ENCODE measurements at regions of chr3 and their contacts with region 1.

Region 1: GRCh38 chr3:179451265-179452175 is at the start of gene GNB4:
- DNase-seq: peak; percentile 62
- H3K4me3 ChIP-seq: peak within 1 kb of the TSS; percentile 49 to 77 (median 56)
- H3K27ac ChIP-seq: peak within 1 kb of the TSS; percentile 90 to 97 (median 92)
- H3K4me1 ChIP-seq: peaks cover 0 to 32% (median 8%) of the 10 kb centered on the region in 4 donors
- H3K27me3 ChIP-seq: peaks cover 27% of the 10 kb centered on the region
- CTCF ChIP-seq: no peak
- EP300 ChIP-seq: no peak
- POLR2A ChIP-seq: no peak
- total RNA-seq, gene GNB4: 9.0 to 11.6 (median 10.2) TPM

Region 2: GRCh38 chr3:179347345-179348194 is 104.0 kb before region 1 on chr3 and contains the start of gene MFN1:
- in situ Hi-C with region 1: no loop called
- intact Hi-C with region 1: loop called (anchors 5 kb)
- DNase-seq: peak; percentile 95
- H3K4me3 ChIP-seq: peak within 1 kb of the TSS; percentile 55 to 80 (median 70)
- H3K27ac ChIP-seq: peak within 1 kb of the TSS; percentile 87 to 94 (median 91)
- H3K4me1 ChIP-seq: peaks cover 6 to 17% (median 7%) of the 10 kb centered on the region in 4 donors
- H3K27me3 ChIP-seq: no peaks in the 10 kb centered on the region
- CTCF ChIP-seq: no peak
- EP300 ChIP-seq: no peak
- POLR2A ChIP-seq: peak; percentile 70
- total RNA-seq, gene MFN1: 46.8 to 69.4 (median 62.6) TPM

Region 3: GRCh38 chr3:179819379-179819778 is 367.9 kb after region 1 on chr3:
- in situ Hi-C with region 1: no loop called
- intact Hi-C with region 1: no loop called
- DNase-seq: no peak
- H3K4me3 ChIP-seq: no peak overlapping the region
- H3K27ac ChIP-seq: no peak overlapping the region
- H3K4me1 ChIP-seq: no peaks in the 10 kb centered on the region
- H3K27me3 ChIP-seq: peaks cover 8% of the 10 kb centered on the region
- CTCF ChIP-seq: no peak
- EP300 ChIP-seq: no peak
- POLR2A ChIP-seq: no peak

Measured in transverse colon (tissue), 4 donors.